ENCODE measurements at regions of chr2 and their contacts with region 1.

Region 1: DNA sequence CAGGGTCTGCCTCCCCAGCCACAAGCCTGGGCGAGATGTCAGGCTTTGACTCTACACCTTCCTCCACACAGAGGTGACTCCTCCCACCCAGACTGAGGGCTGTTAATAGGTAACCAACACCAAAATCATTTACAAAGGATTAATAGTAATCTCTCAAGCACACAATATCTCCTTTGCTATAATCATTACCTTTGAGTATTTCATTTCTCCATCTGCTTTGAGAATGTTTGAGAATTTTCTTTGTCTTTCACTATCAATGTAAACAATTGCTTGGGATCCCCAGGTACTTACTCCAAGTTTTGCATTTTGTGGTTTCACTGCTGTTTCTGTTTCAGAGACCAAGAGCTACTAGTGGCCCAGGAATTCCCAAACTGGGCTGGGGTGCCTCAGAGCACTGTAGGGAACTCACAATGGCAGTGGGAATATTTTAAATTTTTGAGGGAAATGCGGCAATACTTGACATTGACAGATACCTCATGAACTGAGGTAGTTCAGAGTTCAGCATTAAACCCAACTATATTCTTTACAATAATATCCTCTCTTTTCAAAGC is 166.4 kb upstream of the MGAT5 start:
- DNase-seq: no peak

Region 2: DNA sequence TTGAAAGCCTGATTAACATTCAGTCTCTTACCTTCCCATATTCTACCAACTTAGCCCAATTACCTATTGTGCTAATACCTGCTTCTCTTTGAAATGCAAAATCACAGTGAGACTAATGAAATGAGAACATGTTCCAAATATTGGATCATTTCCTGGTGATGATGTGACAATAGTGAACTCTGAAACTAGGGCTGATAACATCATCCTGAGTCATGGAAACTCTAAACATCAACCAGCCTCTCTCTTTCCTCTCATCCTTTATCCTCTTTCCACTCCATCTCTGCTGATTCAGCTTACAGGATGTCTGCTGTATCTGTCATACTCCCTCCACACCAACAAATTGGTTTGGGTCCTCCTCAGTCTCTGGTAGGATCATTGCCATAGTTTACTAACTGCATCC is 420.4 kb before region 1 on chr2:
- in situ Hi-C with region 1: no loop called
- DNase-seq: no peak

Region 3: DNA sequence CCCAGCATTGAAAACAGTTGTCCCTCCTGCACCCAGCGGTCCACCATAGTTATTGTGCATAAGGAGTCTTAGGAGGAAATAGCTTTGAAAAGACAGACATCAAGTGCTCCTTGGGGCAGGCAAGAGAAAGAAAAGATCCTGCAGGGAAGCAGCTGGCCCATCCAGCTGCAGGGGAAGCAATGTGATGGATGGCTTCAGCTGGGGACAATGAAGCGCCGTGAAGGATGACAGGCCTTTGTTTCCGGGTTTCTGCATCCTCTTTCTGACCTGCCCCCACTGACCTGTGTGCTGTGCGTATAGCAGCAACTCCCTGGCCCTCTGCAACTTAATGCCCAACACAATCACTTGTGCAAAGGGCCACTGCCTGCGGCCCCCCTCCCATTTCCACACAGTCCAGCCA is 376.2 kb before region 1 on chr2:
- in situ Hi-C with region 1: no loop called
- DNase-seq: no peak

Region 4: DNA sequence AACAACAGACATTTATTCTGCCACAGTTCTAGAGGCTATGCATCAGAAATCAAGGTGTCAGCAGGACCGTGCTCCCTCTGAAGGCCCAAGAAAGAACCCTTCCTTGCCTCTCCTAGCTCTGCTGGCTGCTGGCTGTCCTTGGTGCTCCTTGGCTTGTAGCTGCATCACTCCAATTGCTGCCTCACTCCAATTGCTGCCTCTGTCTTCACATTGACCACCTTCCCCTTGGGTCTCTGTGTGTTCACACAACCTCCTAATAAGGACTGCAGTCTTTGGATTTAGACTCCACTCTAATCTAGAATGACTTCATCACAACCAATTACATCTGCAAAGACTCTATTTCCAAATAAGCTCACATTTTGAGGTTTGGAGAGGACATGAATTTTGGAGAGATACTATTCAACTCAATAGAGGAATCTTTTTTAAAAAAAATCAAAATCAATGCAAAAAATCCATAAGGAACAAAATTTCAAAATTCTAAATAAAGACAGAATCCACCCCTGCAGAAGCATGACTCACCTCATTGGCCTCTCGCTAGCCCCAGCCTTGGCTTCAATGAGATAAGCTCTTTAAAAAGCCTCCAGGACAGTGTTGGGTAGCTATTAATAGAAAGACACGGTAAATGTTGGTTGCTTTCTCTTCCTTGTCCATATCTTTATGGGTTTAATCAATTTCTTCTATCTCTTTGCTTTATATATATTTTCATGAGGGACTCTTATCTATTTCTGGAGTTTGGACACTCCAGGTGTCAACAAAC is 101.2 kb before region 1 on chr2:
- in situ Hi-C with region 1: loop called (anchors 25 kb)
- DNase-seq: no peak